Mammary epithelial cell (primary cell): ENCODE measurements at regions of chr7 and their contacts with region 1.

Region 1: DNA sequence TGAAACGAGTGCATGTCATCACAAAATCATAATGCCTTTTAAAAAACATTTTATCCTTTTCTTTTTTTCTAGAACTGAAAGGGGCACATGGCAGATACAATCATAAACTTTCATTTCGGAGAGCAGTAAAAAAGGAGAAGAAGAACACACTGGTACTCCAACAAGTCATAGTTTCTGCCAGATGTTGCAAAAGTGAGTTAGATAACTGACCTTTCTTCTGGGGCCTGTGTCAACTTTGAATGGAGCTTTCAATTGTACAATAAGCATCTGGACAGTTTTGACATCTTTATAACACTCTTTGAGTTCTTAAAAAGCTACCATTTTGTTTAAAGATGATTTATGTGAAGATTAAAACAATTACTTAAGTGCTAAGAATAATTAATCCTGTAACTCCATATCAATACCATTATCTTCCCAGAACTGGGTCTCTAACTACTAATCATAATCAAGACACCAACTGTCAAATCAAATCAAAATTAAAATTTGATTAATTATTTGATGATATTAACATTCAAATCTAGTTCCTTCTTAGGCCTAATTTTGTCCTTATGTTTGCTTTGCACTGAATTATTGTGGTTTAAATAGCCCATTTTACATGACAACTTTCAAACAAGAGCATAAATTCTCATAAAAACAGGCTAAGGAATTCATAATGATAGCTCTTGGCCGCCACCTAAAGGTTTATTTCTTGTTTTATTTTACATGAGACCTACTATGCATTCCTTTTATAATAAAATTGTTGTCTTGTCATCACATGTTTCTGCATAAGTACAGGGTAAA is 19.5 kb upstream of the ITGB8 start:
- DNase-seq: peak; percentile 51
- H3K4me3 ChIP-seq: no peak overlapping the region
- H3K27ac ChIP-seq: no peak overlapping the region
- H3K4me1 ChIP-seq: no peaks in the 10 kb centered on the region
- H3K27me3 ChIP-seq: no peaks in the 10 kb centered on the region
- CTCF ChIP-seq: peak; percentile 32 to 44

Region 2: DNA sequence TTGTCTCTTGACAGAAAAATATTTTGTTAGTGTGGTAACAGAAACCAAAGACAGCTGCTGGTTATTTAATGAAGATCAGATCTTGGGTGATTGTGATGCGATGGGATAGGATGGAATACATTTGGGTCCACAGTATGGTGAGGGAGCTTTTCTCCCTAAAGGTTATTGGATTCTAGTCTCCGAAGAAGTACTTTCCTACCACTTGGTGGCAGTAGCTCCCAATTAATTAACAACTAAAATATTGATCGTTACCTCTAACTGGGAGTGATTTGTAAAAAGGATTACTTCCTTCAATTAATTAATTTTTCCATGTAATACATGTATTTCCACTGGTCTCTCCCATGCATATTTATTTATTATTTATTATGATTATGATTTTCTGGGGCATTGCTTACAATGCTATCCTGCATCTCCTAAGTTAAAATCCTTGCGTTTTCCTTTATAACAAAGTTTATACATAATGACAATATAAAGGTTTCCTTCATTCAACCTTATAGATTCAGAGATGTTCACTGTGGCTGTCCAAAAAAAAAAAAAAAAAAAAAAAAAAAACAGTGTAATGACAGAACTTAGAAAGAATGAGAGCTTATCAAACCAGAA is 563.3 kb before region 1 on chr7:
- CTCF ChIA-PET with region 1: no interaction called
- dilution Hi-C with region 1: loop called (anchors 25 kb)
- in situ Hi-C with region 1: loop called (anchors 5 to 10 kb)
- intact Hi-C with region 1: loop called (anchors 2 kb)
- DNase-seq: peak; percentile 21
- H3K4me3 ChIP-seq: no peak overlapping the region
- H3K27ac ChIP-seq: no peak overlapping the region
- H3K4me1 ChIP-seq: peaks cover 6% of the 10 kb centered on the region
- H3K27me3 ChIP-seq: no peaks in the 10 kb centered on the region
- CTCF ChIP-seq: peak; percentile 52 to 65

Region 3: DNA sequence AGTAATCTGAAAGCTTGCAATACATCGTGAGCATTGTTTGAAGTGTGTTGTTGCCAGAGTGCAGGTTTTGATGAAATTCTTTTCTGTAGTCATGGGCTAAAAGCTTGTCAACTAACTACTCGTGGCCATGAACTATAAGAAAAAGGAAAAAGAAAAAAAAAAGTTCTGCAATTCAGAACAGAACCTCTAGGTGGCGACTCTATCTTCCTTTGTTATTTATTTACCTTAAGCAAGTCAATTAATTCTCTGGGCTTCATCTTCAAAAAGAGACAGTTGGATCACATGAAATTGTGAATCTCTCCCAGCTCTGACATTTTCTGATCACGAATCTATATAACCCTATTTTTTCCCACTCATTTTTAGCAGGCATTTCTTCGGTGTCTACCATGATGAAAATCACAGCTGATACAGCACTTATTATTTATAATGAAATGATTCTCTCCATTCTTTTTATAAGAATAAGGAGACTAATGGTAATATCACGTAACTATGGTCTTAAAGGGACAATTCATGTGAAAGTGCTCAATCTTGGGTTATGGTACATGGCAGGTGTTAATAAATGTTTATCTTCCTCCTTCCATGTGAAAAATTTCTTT is 556.5 kb before region 1 on chr7:
- CTCF ChIA-PET with region 1: no interaction called
- dilution Hi-C with region 1: loop called (anchors 25 kb)
- in situ Hi-C with region 1: loop called (anchors 5 to 10 kb)
- intact Hi-C with region 1: loop called (anchors 1 kb)
- DNase-seq: peak; percentile 27
- H3K4me3 ChIP-seq: no peak overlapping the region
- H3K27ac ChIP-seq: no peak overlapping the region
- H3K4me1 ChIP-seq: peaks cover 4% of the 10 kb centered on the region
- H3K27me3 ChIP-seq: no peaks in the 10 kb centered on the region
- CTCF ChIP-seq: peak; percentile 65 to 68

Region 4: GRCh38 chr7:19982841-19983835 is 328.0 kb before region 1 on chr7:
- CTCF ChIA-PET with region 1: no interaction called
- dilution Hi-C with region 1: no loop called
- in situ Hi-C with region 1: loop called in 1 of 2 experiments (anchors 25 kb)
- intact Hi-C with region 1: loop called (anchors 1 kb)
- DNase-seq: peak; percentile 45
- H3K4me3 ChIP-seq: no peak overlapping the region
- H3K27ac ChIP-seq: no peak overlapping the region
- H3K4me1 ChIP-seq: no peaks in the 10 kb centered on the region
- H3K27me3 ChIP-seq: no peaks in the 10 kb centered on the region
- CTCF ChIP-seq: peak in 1 of 2 donors; percentile 40

Region 5: GRCh38 chr7:20158684-20159083 is 152.5 kb before region 1 on chr7:
- CTCF ChIA-PET with region 1: no interaction called
- dilution Hi-C with region 1: no loop called
- in situ Hi-C with region 1: no loop called
- intact Hi-C with region 1: loop called (anchors 1 kb)
- DNase-seq: no peak
- H3K4me3 ChIP-seq: no peak overlapping the region
- H3K27ac ChIP-seq: no peak overlapping the region
- H3K4me1 ChIP-seq: peaks cover 5% of the 10 kb centered on the region
- H3K27me3 ChIP-seq: no peaks in the 10 kb centered on the region
- CTCF ChIP-seq: peak; percentile 2 to 29

Region 6: DNA sequence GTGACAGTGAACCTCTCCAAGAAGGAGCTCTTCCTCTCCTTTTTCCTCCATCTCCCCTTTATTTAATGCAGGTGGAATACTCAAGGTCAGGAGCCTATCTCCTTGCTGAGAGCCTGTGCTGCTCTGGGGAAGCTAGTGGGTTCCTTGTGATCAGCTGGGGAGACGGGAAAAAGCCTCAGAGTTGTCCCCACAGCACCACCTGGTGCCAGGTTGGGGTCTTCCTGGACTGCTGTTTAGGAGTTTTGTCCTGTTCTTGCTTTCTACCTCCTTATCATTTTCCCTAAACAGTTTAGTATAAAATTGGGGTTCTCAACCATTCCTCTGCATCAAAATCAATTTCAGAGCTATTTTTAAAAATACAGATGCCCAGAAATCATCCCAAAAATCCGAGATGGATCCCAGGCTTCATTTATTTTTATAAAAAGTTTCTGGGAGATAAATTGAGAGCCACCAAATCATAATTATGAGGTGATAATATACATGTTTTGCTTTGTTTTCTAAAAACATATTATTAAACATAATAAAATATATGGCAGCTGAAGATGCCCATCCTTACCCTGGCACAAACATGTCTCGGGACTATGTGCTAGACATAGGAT is 138.3 kb before region 1 on chr7:
- CTCF ChIA-PET with region 1: no interaction called
- dilution Hi-C with region 1: no loop called
- in situ Hi-C with region 1: no loop called
- intact Hi-C with region 1: loop called (anchors 1 kb)
- DNase-seq: peak; percentile 41
- H3K4me3 ChIP-seq: no peak overlapping the region
- H3K27ac ChIP-seq: no peak overlapping the region
- H3K4me1 ChIP-seq: no peaks in the 10 kb centered on the region
- H3K27me3 ChIP-seq: no peaks in the 10 kb centered on the region
- CTCF ChIP-seq: peak; percentile 70 to 81